ENCODE measurements at regions of chr9 and their contacts with region 1.

Region 1: DNA sequence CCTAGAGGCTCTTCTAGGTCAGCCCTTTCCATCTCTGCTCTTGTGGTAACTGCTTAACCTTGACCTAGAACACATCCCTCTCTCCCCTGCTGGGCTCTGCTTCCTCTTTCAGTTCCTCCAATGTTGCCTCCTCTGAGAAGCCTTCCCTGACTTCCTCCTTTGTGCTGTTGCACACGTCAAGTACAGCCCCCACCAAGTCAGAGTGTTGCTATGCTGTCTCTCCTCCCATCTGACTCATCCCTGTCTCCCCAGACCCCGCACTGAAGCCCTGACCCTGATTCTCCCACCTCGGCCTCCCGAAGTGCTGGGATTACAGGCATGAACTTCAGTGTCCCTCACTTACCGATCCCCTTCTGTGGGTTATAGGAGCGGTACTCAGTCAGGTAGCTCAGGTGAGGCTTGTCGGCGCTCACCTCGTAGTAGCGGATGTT is 10.4 kb upstream of the TRIM14 start:
- DNase-seq: no peak
- ATAC-seq: peak; percentile 60 to 86 (median 70)
- H3K4me3 ChIP-seq: no peak overlapping the region
- H3K27ac ChIP-seq: no peak overlapping the region
- H3K4me1 ChIP-seq: no peaks in the 10 kb centered on the region
- H3K27me3 ChIP-seq: no peaks in the 10 kb centered on the region
- CTCF ChIP-seq: no peak
- POLR2A ChIP-seq: no peak

Region 2: GRCh38 chr9:98185611-98186171 is 56.2 kb after region 1 on chr9:
- intact Hi-C with region 1: loop called (anchors 10 kb)
- DNase-seq: peak in 1 of 3 donors; percentile 37
- ATAC-seq: peak in 2 of 4 donors; percentile 23 to 24
- H3K4me3 ChIP-seq: no peak overlapping the region
- H3K27ac ChIP-seq: no peak overlapping the region
- H3K4me1 ChIP-seq: peaks cover 0 to 17% (median 3%) of the 10 kb centered on the region in 4 donors
- H3K27me3 ChIP-seq: no peaks in the 10 kb centered on the region
- CTCF ChIP-seq: no peak
- POLR2A ChIP-seq: no peak

Region 3: GRCh38 chr9:98192503-98193335 is 63.3 kb after region 1 on chr9 and contains the start of gene CORO2A:
- intact Hi-C with region 1: loop called (anchors 10 kb)
- DNase-seq: peak; percentile 88 to 90 (median 89)
- ATAC-seq: peak; percentile 87 to 95 (median 91)
- H3K4me3 ChIP-seq: peak within 1 kb of the TSS; percentile 74 to 76 (median 74)
- H3K27ac ChIP-seq: peak within 1 kb of the TSS; percentile 43 to 65 (median 63)
- H3K4me1 ChIP-seq: peaks cover 0 to 16% (median 0%) of the 10 kb centered on the region in 4 donors
- H3K27me3 ChIP-seq: no peaks in the 10 kb centered on the region
- CTCF ChIP-seq: peak; percentile 27 to 49 (median 44)
- POLR2A ChIP-seq: peak; percentile 63
- total RNA-seq, gene CORO2A: 0.67 to 6.2 (median 3.3) TPM

Measured in right lobe of liver (tissue), 6 donors.